CD14-positive monocyte (primary cell): ENCODE measurements at regions of chr9 and their contacts with region 1.

Region 1: GRCh38 chr9:136631038-136632000 is 31.4 kb upstream of the EGFL7 start:
- DNase-seq: peak; percentile 82 to 85 (median 85)
- H3K4me3 ChIP-seq: no peak overlapping the region
- H3K4me3 Mint-ChIP-seq: no peak overlapping the region
- H3K27ac ChIP-seq: no peak overlapping the region
- H3K27ac Mint-ChIP-seq: no peak overlapping the region
- H3K4me1 ChIP-seq: peaks cover 4 to 23% of the 10 kb centered on the region in 2 donors
- H3K4me1 Mint-ChIP-seq: peaks cover 3% of the 10 kb centered on the region
- H3K27me3 ChIP-seq: peaks cover 0 to 25% of the 10 kb centered on the region in 2 donors
- H3K27me3 Mint-ChIP-seq: peaks cover 27 to 36% (median 32%) of the 10 kb centered on the region in 3 donors
- CTCF ChIP-seq: peak; percentile 79

Region 2: DNA sequence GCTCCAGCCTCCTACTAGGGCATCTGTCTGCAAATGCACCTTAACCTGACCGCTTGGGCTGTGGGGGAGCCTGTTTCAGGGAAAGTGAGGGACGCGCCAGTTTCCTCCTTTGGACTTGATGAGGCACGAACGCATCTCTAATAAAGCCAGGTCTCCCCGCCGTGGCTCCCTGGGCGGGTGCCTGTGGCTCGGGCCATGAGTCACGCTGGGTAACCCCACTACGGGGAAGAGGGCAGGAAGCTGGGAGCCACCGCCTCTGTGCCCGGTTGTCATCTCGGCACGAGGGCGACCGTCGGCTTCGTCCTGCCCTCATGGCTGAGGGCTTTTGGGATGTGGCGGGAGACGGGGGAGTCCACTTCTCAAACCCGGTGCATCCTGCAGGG is 97.6 kb before region 1 on chr9:
- intact Hi-C with region 1: loop called in 1 of 2 experiments (anchors 5 kb)
- DNase-seq: peak; percentile 95 to 97 (median 97)
- H3K4me3 ChIP-seq: peak overlapping the region in 1 of 3 experiments; percentile 47
- H3K4me3 Mint-ChIP-seq: peak overlapping the region; percentile 54 to 79
- H3K27ac ChIP-seq: peak overlapping the region; percentile 58 to 94
- H3K27ac Mint-ChIP-seq: peak overlapping the region; percentile 85 to 92 (median 89)
- H3K4me1 ChIP-seq: peaks cover 69 to 92% of the 10 kb centered on the region in 2 donors
- H3K4me1 Mint-ChIP-seq: peaks cover 67% of the 10 kb centered on the region
- H3K27me3 ChIP-seq: peaks cover 0 to 35% of the 10 kb centered on the region in 2 donors
- H3K27me3 Mint-ChIP-seq: peaks cover 21 to 44% (median 25%) of the 10 kb centered on the region in 3 donors
- CTCF ChIP-seq: no peak

Region 3: DNA sequence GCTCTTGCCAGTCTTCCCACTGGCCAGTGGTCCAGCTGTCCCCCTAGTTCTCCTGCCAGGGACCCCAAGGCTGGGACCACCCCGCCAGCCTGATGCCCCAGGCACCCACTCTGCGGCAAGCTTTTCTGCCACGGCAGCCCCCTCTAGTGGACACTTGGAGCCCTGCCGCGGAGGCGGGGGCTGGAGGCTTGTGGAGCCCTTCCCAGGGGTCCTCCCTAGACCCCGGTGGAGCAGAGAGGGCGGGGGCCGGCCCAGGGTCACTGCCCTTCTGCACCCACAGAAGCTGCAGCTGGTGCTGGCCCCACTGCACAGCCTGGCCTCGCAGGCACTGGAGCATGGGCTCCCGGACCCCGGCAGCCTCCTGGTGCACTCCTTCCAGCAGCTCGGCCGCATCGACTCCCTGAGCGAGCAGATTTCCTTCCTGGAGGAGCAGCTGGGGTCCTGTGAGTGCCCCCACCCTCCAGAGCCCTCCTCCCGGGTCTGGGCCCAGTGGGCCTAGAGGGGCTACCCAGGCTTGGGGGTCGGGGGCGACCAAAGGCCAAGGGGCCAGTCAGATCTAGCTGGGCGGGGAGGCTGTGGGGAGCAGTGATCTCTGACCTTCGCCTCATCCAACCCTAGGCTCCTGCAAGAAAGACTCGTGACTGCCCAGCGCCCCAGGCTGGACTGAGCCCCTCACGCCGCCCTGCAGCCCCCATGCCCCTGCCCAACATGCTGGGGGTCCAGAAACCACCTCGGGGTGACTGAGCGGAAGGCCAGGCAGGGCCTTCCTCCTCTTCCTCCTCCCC is 40.5 kb after region 1 on chr9:
- intact Hi-C with region 1: no loop called
- DNase-seq: peak in 1 of 3 donors; percentile 21
- H3K4me3 ChIP-seq: no peak overlapping the region
- H3K4me3 Mint-ChIP-seq: no peak overlapping the region
- H3K27ac ChIP-seq: no peak overlapping the region
- H3K27ac Mint-ChIP-seq: no peak overlapping the region
- H3K4me1 ChIP-seq: peaks cover 0 to 4% of the 10 kb centered on the region in 2 donors
- H3K4me1 Mint-ChIP-seq: no peaks in the 10 kb centered on the region
- H3K27me3 ChIP-seq: peaks cover 8 to 31% of the 10 kb centered on the region in 2 donors
- H3K27me3 Mint-ChIP-seq: peaks cover 21 to 37% (median 25%) of the 10 kb centered on the region in 3 donors
- CTCF ChIP-seq: peak; percentile 94